Activated B cell treated with CpG ODN at 0.5 μM for 24 hours (primary cell): ENCODE measurements at regions of chr1 and their contacts with region 1.

Region 1: GRCh38 chr1:32773018-32773763 is 44.0 kb downstream of the YARS1 start:
- DNase-seq: peak; percentile 60
- ATAC-seq: peak; percentile 76
- H3K4me3 Mint-ChIP-seq: no peak overlapping the region
- H3K27ac Mint-ChIP-seq: no peak overlapping the region
- H3K4me1 Mint-ChIP-seq: no peaks in the 10 kb centered on the region
- H3K27me3 Mint-ChIP-seq: no peaks in the 10 kb centered on the region
- CTCF ChIP-seq: peak; percentile 45

Region 2: DNA sequence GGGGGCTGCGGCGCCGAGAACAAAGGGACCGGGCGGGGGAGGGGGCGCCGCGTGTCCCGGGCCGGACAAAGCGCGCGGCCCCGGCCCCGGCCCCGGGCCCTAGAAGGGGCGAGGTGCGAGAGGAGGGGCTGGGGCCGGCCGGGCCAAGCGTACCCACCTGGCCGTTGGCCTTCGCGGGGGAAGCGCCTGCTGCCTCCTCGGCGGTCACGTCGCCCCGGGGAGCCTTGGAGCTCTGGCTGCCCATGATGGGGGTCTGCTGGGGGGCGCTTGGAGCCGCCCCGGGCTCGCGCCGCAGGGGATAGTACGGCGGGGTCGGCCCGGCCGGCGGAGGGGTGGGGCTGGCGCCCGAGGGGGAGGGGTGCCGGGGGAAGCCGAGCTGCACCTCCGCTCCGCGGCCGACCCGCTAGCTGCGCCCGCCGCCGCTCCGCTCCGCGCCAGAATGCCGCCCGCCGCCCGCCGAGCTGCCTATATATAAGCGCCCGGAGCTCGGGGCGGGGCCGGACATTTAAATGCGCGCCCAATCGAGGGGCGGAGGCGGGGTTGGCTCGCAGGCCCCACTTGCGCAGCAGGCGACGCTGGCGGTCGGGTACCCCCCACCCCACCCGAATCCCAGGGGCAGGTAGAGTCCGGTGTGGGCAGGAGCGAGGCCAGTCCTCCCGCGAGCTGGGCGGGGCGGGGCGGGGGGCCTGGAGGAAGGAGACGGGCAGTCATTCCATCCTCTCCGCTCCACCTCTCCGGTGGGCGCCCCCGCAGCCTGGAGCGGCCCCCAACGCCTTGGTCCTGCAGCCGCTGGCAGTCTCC is 437.2 kb before region 1 on chr1 and contains the start of gene MARCKSL1:
- CTCF ChIA-PET with region 1: no interaction called
- POLR2A ChIA-PET with region 1: no interaction called
- intact Hi-C with region 1: no loop called
- DNase-seq: peak; percentile 90
- ATAC-seq: peak; percentile 54
- H3K4me3 Mint-ChIP-seq: peak within 1 kb of the TSS; percentile 86
- H3K27ac Mint-ChIP-seq: peak within 1 kb of the TSS; percentile 87
- H3K4me1 Mint-ChIP-seq: peaks cover 61% of the 10 kb centered on the region
- H3K27me3 Mint-ChIP-seq: no peaks in the 10 kb centered on the region
- CTCF ChIP-seq: no peak
- total RNA-seq, gene MARCKSL1: 132 TPM in 2 replicates

Region 3: GRCh38 chr1:32400876-32401631 is 372.1 kb before region 1 on chr1:
- CTCF ChIA-PET with region 1: interaction called, 40 read pairs
- POLR2A ChIA-PET with region 1: no interaction called
- intact Hi-C with region 1: loop called (anchors 1 kb)
- DNase-seq: peak; percentile 51
- ATAC-seq: peak; percentile 83
- H3K4me3 Mint-ChIP-seq: no peak overlapping the region
- H3K27ac Mint-ChIP-seq: no peak overlapping the region
- H3K4me1 Mint-ChIP-seq: peaks cover 4% of the 10 kb centered on the region
- H3K27me3 Mint-ChIP-seq: no peaks in the 10 kb centered on the region
- CTCF ChIP-seq: peak; percentile 53

Region 4: DNA sequence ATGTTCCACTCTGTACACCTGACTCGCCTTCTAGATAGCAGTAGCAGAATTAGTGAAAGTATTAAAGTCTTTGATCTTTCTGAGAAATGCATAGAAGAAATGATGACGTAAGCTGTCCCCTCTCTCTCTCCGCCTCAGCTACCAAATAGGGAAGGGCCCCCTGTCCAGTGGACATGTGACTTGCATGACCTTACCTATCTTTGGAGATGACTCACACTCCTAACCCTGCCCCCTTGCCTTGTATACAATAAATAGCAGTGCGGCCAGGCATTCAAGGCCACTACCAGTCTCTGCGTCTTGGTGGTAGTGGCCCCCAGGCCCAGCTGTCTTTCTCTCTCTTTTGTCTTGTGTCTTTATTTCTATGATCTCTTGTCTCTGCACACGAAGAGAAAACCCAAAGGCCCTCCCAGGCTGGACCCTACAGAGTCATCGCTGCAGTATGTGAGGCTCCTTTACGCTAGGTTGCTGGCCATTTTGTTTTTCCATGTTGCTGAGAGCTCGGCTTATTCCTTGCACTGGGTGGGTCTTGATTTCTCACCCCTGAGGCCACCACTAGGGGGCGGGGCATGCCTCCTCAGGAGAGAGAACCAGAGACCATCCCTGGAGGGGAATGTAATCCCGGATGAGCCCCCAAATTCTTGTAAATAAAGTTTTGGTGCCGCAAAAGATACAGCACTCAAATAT is 324.3 kb before region 1 on chr1:
- CTCF ChIA-PET with region 1: no interaction called
- POLR2A ChIA-PET with region 1: no interaction called
- intact Hi-C with region 1: loop called (anchors 1 kb)
- DNase-seq: no peak
- ATAC-seq: no peak
- H3K4me3 Mint-ChIP-seq: no peak overlapping the region
- H3K27ac Mint-ChIP-seq: no peak overlapping the region
- H3K4me1 Mint-ChIP-seq: no peaks in the 10 kb centered on the region
- H3K27me3 Mint-ChIP-seq: peaks cover 24% of the 10 kb centered on the region
- CTCF ChIP-seq: no peak

Region 5: GRCh38 chr1:32521165-32521564 is 252.0 kb before region 1 on chr1:
- CTCF ChIA-PET with region 1: interaction called, 41 read pairs
- POLR2A ChIA-PET with region 1: interaction called, 17 read pairs
- intact Hi-C with region 1: loop called (anchors 1 kb)
- DNase-seq: no peak
- ATAC-seq: no peak
- H3K4me3 Mint-ChIP-seq: peak overlapping the region; percentile 82
- H3K27ac Mint-ChIP-seq: no peak overlapping the region
- H3K4me1 Mint-ChIP-seq: peaks cover 5% of the 10 kb centered on the region
- H3K27me3 Mint-ChIP-seq: no peaks in the 10 kb centered on the region
- CTCF ChIP-seq: no peak

Region 6: DNA sequence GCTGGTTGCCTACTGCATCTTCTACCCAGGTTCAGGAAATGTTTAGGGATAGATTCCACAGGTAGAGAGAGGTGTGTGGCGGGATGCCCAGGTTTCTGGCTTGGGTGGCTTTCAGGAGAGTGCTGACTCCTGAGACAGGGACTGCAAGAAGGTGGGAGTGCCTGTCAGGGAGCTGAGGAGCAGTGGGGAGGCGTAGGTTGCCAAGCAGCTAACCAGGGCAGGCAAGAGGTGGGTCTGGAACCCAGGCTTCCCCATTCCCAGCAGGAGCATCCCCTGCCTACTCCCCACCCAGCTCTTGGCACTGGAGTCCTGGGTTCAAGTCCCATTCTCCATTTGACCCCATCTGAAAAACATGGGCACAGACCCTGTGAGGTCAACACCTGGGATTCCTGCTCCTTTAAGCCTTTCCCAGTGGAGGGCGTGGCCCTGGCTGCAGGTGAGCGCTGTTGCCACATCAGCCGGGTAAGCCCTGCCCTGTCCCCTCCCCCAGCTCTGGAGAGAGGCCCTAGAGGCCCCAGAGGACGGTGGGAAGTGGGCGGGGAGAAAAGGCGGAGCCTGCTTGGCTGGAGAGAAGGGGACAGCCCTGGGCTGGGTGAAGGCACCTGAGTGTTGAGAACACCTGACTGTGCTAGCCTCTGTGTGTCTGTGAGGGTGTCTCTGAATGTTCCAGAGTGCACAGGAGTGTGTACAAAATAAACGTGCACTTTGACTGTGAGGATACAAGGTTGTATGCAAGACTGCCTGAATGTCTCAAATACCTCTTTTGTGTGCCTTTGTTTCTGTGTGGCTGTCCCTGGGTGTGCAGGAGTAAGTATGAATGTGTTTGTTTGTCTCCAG is 56.7 kb before region 1 on chr1:
- CTCF ChIA-PET with region 1: interaction called, 50 read pairs
- POLR2A ChIA-PET with region 1: interaction called, 6 read pairs
- intact Hi-C with region 1: loop called (anchors 1 kb)
- DNase-seq: no peak
- ATAC-seq: peak; percentile 68
- H3K4me3 Mint-ChIP-seq: no peak overlapping the region
- H3K27ac Mint-ChIP-seq: no peak overlapping the region
- H3K4me1 Mint-ChIP-seq: peaks cover 7% of the 10 kb centered on the region
- H3K27me3 Mint-ChIP-seq: peaks cover 19% of the 10 kb centered on the region
- CTCF ChIP-seq: no peak

Region 7: GRCh38 chr1:32870615-32871363 is 97.6 kb after region 1 on chr1 and contains the start of gene FNDC5:
- CTCF ChIA-PET with region 1: interaction called, 3 read pairs
- POLR2A ChIA-PET with region 1: interaction called, 3 read pairs
- intact Hi-C with region 1: loop called (anchors 5 kb)
- DNase-seq: no peak
- ATAC-seq: no peak
- H3K4me3 Mint-ChIP-seq: peak within 1 kb of the TSS; percentile 75
- H3K27ac Mint-ChIP-seq: no peak within 1 kb of the TSS
- H3K4me1 Mint-ChIP-seq: peaks cover 34% of the 10 kb centered on the region
- H3K27me3 Mint-ChIP-seq: peaks cover 37% of the 10 kb centered on the region
- CTCF ChIP-seq: no peak
- total RNA-seq, gene FNDC5: 0.55 and 1.4 TPM in 2 replicates